H1 (cell line): ENCODE measurements at regions of chr11 and their contacts with region 1.

Region 1: GRCh38 chr11:133927690-133928627 is 28.8 kb downstream of the IGSF9B start:
- DNase-seq: peak in 1 of 2 experiments; percentile 89
- H3K4me3 ChIP-seq: no peak overlapping the region
- H3K27ac ChIP-seq: no peak overlapping the region; the same call in 1 of the 2 replicates
- H3K4me1 ChIP-seq: peaks cover 0 to 2% (median 0%) of the 10 kb centered on the region in 4 experiments; a peak in 4 of 7 replicates
- H3K27me3 ChIP-seq: no peaks in the 10 kb centered on the region
- CTCF ChIP-seq: peak; percentile 86 to 96 (median 94)
- EP300 ChIP-seq: no peak
- POLR2A ChIP-seq: no peak
- RAD21 ChIP-seq: peak; percentile 90

Region 2: GRCh38 chr11:133947321-133947756 is 19.4 kb after region 1 on chr11:
- CTCF ChIA-PET with region 1: interaction called, 52 read pairs
- POLR2A ChIA-PET with region 1: interaction called, 4 read pairs
- DNase-seq: peak in 1 of 2 experiments; percentile 87
- H3K4me3 ChIP-seq: no peak overlapping the region; a peak in 2 of 8 replicates
- H3K27ac ChIP-seq: no peak overlapping the region
- H3K4me1 ChIP-seq: peaks cover 16 to 63% (median 54%) of the 10 kb centered on the region in 4 experiments
- H3K27me3 ChIP-seq: no peaks in the 10 kb centered on the region
- CTCF ChIP-seq: peak in 2 of 3 experiments; percentile 45 to 54; a peak in 3 of 4 replicates
- EP300 ChIP-seq: no peak
- POLR2A ChIP-seq: no peak
- RAD21 ChIP-seq: peak; percentile 55 to 60; a peak in 3 of 4 replicates

Region 3: GRCh38 chr11:133984828-133985227 is 56.9 kb after region 1 on chr11:
- CTCF ChIA-PET with region 1: interaction called, 10 read pairs
- POLR2A ChIA-PET with region 1: no interaction called
- DNase-seq: no peak
- H3K4me3 ChIP-seq: no peak overlapping the region
- H3K27ac ChIP-seq: no peak overlapping the region
- H3K4me1 ChIP-seq: no peaks in the 10 kb centered on the region; a peak in 1 of 7 replicates
- H3K27me3 ChIP-seq: 0 out of 7 replicates have a peak, but pooled peaks cover 0 to 2% (median 0%) of the 10 kb centered on the region in 4 experiments
- CTCF ChIP-seq: no peak
- EP300 ChIP-seq: no peak
- POLR2A ChIP-seq: no peak
- RAD21 ChIP-seq: no peak

Region 4: GRCh38 chr11:134033696-134034491 is 105.9 kb after region 1 on chr11:
- CTCF ChIA-PET with region 1: interaction called, 21 read pairs
- POLR2A ChIA-PET with region 1: no interaction called
- DNase-seq: peak; percentile 77 to 78
- H3K4me3 ChIP-seq: peak overlapping the region in 1 of 4 experiments; percentile 23; a peak in 1 of 8 replicates
- H3K27ac ChIP-seq: no peak overlapping the region
- H3K4me1 ChIP-seq: peaks cover 3 to 27% (median 23%) of the 10 kb centered on the region in 4 experiments
- H3K27me3 ChIP-seq: peaks cover 0 to 5% (median 3%) of the 10 kb centered on the region in 4 experiments; a peak in 3 of 7 replicates
- CTCF ChIP-seq: no peak
- EP300 ChIP-seq: no peak
- POLR2A ChIP-seq: peak in 1 of 2 experiments; percentile 64; a peak in 2 of 3 replicates
- RAD21 ChIP-seq: no peak

Region 5: DNA sequence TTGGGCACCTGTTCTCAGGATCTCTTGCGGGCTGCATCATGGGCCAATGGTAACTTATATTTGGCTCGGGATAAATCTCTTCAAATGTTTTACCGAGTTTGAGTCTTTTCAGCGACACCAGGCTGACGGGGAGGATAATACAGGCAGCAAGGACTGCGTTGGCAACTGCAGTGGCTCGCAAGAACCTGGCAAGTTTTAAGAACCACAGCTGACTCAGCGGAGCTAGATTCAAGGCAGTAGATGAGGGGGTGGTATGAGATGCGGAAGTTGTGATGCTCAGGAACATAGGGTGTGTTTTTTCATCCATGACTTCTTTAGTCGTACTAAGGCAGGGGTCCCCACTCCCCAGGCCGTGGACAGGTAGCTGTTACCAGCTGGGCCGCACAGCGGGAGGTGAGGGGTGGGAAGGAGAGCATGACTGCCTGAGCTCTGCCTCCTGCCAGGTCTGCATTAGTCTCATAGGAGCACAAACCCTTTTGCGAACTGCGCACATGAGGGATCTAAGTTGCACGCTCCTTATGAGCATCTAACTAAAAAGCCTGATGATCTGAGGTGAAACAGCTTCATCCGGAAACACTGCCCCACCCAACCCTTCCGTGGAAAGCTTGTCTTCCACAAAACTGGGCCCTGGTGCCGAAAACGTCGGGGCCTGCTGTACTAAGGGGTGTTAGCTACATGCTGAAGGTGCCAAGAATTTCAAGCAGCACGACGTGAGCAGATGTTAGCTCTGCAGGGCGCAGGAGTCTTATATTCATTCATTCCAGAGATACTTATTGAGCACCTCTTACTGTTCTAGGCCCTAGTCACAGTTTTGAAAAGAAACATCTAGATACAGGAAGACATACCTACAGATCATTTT is 134.5 kb after region 1 on chr11:
- CTCF ChIA-PET with region 1: interaction called, 10 read pairs
- POLR2A ChIA-PET with region 1: no interaction called
- DNase-seq: peak in 1 of 2 experiments; percentile 40
- H3K4me3 ChIP-seq: no peak overlapping the region
- H3K27ac ChIP-seq: no peak overlapping the region
- H3K4me1 ChIP-seq: peaks cover 0 to 2% (median 0%) of the 10 kb centered on the region in 4 experiments; a peak in 2 of 7 replicates
- H3K27me3 ChIP-seq: no peaks in the 10 kb centered on the region
- CTCF ChIP-seq: no peak
- EP300 ChIP-seq: no peak
- POLR2A ChIP-seq: no peak
- RAD21 ChIP-seq: no peak

Region 6: GRCh38 chr11:134275534-134276395 is 347.8 kb after region 1 on chr11 and contains the start of gene GLB1L3:
- CTCF ChIA-PET with region 1: no interaction called
- POLR2A ChIA-PET with region 1: no interaction called
- DNase-seq: peak in 1 of 2 experiments; percentile 85
- H3K4me3 ChIP-seq: peak within 1 kb of the TSS; percentile 88 to 92 (median 90)
- H3K27ac ChIP-seq: no peak within 1 kb of the TSS
- H3K4me1 ChIP-seq: peaks cover 8 to 17% (median 14%) of the 10 kb centered on the region in 4 experiments
- H3K27me3 ChIP-seq: peaks cover 0 to 7% (median 0%) of the 10 kb centered on the region in 4 experiments; a peak in 3 of 7 replicates
- CTCF ChIP-seq: peak; percentile 34 to 56 (median 44); a peak in 3 of 4 replicates
- EP300 ChIP-seq: no peak
- POLR2A ChIP-seq: no peak; a peak in 1 of 3 replicates
- RAD21 ChIP-seq: peak in 1 of 2 experiments; percentile 10; a peak in 1 of 4 replicates
- total RNA-seq, gene GLB1L3: 32.6 and 33.2 TPM in 2 replicates